Activated CD4-positive, alpha-beta memory T cell treated with anti-CD3 and anti-CD28 coated beads for 36 hours (primary cell): ENCODE measurements at regions of chr21 and their contacts with region 1.

Region 1: GRCh38 chr21:15064576-15065391 is at the start of gene NRIP1:
- DNase-seq: peak; percentile 81
- H3K4me3 Mint-ChIP-seq: peak within 1 kb of the TSS; percentile 84
- H3K27ac Mint-ChIP-seq: peak within 1 kb of the TSS; percentile 86
- H3K4me1 Mint-ChIP-seq: peaks cover 45% of the 10 kb centered on the region
- H3K27me3 Mint-ChIP-seq: peaks cover 16% of the 10 kb centered on the region
- total RNA-seq, gene NRIP1: 4.4 to 5.4 TPM

Region 2: DNA sequence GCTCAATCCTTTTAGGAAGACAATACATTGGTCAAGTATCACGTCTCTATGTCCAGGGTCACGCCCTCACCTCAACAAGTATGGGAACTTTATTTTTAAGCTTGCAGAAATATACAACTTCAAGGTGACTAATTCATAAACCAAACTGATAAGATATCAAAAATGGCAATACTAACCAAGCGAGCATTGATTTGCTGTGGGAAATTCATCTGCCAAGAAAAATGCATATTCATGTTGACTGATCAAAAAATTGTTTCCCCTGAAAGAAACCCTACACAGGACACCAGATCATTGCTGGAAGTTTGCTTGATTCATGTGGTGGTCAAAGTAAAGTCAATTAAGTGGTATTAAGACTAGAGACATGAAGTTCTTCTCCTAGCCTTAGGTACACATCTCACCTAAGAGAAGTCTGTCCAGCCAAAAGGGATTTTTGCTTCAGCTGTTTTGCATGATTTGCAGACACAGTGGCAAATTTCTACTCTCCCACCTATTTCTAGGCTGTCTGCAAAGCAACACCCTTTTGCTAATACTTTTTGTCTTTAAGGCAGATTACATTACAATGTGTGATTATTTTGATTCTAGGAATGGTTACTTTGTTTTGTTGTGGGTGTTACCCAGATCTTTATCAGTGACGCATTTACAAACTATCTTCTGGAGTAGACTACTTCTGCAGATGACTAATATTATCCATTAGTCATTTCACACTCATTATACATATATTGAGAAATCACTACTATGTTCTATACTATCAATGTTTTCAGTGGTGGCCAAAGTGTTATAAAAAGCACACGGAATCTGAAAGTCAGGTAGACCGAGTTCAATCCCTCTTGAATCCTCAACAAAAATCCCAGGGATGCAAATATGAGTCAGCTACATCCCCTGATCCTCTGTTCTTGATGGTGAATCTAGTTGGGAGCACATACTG is 531.0 kb before region 1 on chr21:
- CTCF ChIA-PET with region 1: no interaction called
- POLR2A ChIA-PET with region 1: no interaction called
- intact Hi-C with region 1: loop called (anchors 5 kb)
- DNase-seq: peak; percentile 29
- H3K4me3 Mint-ChIP-seq: peak overlapping the region; percentile 95
- H3K27ac Mint-ChIP-seq: peak overlapping the region; percentile 100
- H3K4me1 Mint-ChIP-seq: peaks cover 82% of the 10 kb centered on the region
- H3K27me3 Mint-ChIP-seq: peaks cover 2% of the 10 kb centered on the region

Region 3: DNA sequence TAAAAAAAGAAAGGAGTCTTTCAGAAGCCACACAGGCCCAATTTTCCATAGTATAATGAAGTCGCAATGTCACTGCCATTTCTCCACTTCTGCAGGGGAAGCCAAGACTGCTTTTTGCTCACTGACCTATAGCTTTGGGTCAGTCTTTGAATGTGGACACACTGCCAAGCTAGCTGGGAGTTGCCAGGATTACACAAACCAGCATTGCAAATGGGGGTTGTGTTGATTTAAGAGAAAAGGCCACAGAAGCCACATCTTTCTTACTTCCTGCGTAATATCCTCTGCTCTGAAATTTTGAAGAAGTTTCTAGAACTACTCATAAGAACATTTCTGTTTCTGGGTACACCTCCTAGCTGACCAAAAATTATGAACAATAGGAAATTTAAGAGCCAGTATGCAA is 472.9 kb before region 1 on chr21:
- CTCF ChIA-PET with region 1: no interaction called
- POLR2A ChIA-PET with region 1: no interaction called
- intact Hi-C with region 1: no loop called
- DNase-seq: no peak
- H3K4me3 Mint-ChIP-seq: no peak overlapping the region
- H3K27ac Mint-ChIP-seq: peak overlapping the region; percentile 23
- H3K4me1 Mint-ChIP-seq: peaks cover 21% of the 10 kb centered on the region
- H3K27me3 Mint-ChIP-seq: no peaks in the 10 kb centered on the region

Region 4: GRCh38 chr21:14901482-14901958 is 163.3 kb before region 1 on chr21:
- CTCF ChIA-PET with region 1: no interaction called
- POLR2A ChIA-PET with region 1: no interaction called
- intact Hi-C with region 1: loop called (anchors 1 kb)
- DNase-seq: peak; percentile 32
- H3K4me3 Mint-ChIP-seq: no peak overlapping the region
- H3K27ac Mint-ChIP-seq: no peak overlapping the region
- H3K4me1 Mint-ChIP-seq: peaks cover 13% of the 10 kb centered on the region
- H3K27me3 Mint-ChIP-seq: no peaks in the 10 kb centered on the region

Region 5: GRCh38 chr21:15080508-15080907 is 15.7 kb after region 1 on chr21:
- CTCF ChIA-PET with region 1: no interaction called
- POLR2A ChIA-PET with region 1: no interaction called
- intact Hi-C with region 1: no loop called
- DNase-seq: no peak
- H3K4me3 Mint-ChIP-seq: no peak overlapping the region
- H3K27ac Mint-ChIP-seq: no peak overlapping the region
- H3K4me1 Mint-ChIP-seq: no peaks in the 10 kb centered on the region
- H3K27me3 Mint-ChIP-seq: peaks cover 10% of the 10 kb centered on the region

Region 6: DNA sequence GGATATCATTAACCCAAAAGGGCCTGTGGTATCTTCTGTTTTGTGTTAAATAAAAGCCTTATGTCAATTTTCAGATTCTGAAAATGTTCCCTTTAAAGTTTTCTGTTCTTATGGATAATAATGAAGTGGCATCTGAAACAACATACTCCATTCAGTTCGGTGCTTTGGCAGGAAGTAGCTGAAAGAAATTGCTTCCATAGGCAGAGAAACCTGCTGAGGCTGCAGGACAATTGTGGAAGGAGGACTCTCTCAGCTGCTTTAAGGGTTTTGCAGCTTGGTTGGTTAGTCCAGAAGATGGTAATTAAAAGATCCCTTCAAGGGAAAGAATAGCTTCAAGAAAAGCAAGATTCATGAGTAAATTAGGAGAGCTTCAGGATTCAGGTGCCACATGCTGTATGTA is 30.5 kb after region 1 on chr21:
- CTCF ChIA-PET with region 1: no interaction called
- POLR2A ChIA-PET with region 1: no interaction called
- intact Hi-C with region 1: no loop called
- DNase-seq: no peak
- H3K4me3 Mint-ChIP-seq: no peak overlapping the region
- H3K27ac Mint-ChIP-seq: no peak overlapping the region
- H3K4me1 Mint-ChIP-seq: no peaks in the 10 kb centered on the region
- H3K27me3 Mint-ChIP-seq: no peaks in the 10 kb centered on the region

Region 7: GRCh38 chr21:15422783-15423182 is 358.0 kb after region 1 on chr21:
- CTCF ChIA-PET with region 1: no interaction called
- POLR2A ChIA-PET with region 1: no interaction called
- intact Hi-C with region 1: loop called (anchors 1 kb)
- DNase-seq: peak; percentile 15
- H3K4me3 Mint-ChIP-seq: no peak overlapping the region
- H3K27ac Mint-ChIP-seq: peak overlapping the region; percentile 16
- H3K4me1 Mint-ChIP-seq: peaks cover 32% of the 10 kb centered on the region
- H3K27me3 Mint-ChIP-seq: no peaks in the 10 kb centered on the region

Region 8: GRCh38 chr21:15592271-15592860 is 527.6 kb after region 1 on chr21:
- CTCF ChIA-PET with region 1: no interaction called
- POLR2A ChIA-PET with region 1: no interaction called
- intact Hi-C with region 1: loop called (anchors 5 kb)
- DNase-seq: no peak
- H3K4me3 Mint-ChIP-seq: no peak overlapping the region
- H3K27ac Mint-ChIP-seq: no peak overlapping the region
- H3K4me1 Mint-ChIP-seq: no peaks in the 10 kb centered on the region
- H3K27me3 Mint-ChIP-seq: peaks cover 3% of the 10 kb centered on the region